ENCODE measurements at regions of chr4 and their contacts with region 1.

Region 1: GRCh38 chr4:10690185-10690907 is 5.8 kb upstream of the CLNK start:
- DNase-seq: peak; percentile 54
- ATAC-seq: peak; percentile 53
- H3K4me3 ChIP-seq: peak overlapping the region in 1 of 5 experiments; percentile 10
- H3K4me3 Mint-ChIP-seq: peak overlapping the region; percentile 23
- H3K27ac ChIP-seq: peak overlapping the region; percentile 48 to 50
- H3K27ac Mint-ChIP-seq: peak overlapping the region; percentile 77
- H3K4me1 ChIP-seq: peaks cover 43 to 47% of the 10 kb centered on the region in 2 donors
- H3K4me1 Mint-ChIP-seq: peaks cover 45% of the 10 kb centered on the region
- H3K27me3 ChIP-seq: no peaks in the 10 kb centered on the region
- H3K27me3 Mint-ChIP-seq: no peaks in the 10 kb centered on the region
- CTCF ChIP-seq: no peak

Region 2: DNA sequence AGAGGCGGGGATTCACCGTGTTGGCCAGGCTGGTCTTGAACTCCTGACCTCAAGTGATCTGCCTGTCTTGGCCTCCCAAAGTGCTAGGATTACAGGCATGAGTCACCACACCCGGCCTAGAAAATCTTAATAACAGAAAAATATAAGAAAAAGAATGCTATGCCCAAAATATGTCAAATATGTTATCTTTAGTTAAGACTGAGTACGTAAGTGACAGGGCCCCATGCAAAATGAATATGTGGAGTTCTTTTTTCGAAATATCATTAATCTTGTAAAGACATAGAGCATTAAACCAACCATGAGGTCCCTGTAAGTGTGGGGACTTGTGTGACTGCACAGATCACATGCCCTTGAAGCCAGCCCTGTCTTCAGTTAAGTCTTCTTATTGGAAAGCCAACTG is 224.2 kb before region 1 on chr4:
- CTCF ChIA-PET with region 1: no interaction called
- POLR2A ChIA-PET with region 1: no interaction called
- intact Hi-C with region 1: no loop called
- DNase-seq: no peak
- ATAC-seq: no peak
- H3K4me3 ChIP-seq: no peak overlapping the region
- H3K4me3 Mint-ChIP-seq: no peak overlapping the region
- H3K27ac ChIP-seq: no peak overlapping the region
- H3K27ac Mint-ChIP-seq: no peak overlapping the region
- H3K4me1 ChIP-seq: peaks cover 6 to 7% of the 10 kb centered on the region in 2 donors
- H3K4me1 Mint-ChIP-seq: peaks cover 9% of the 10 kb centered on the region
- H3K27me3 ChIP-seq: peaks cover 0 to 25% (median 16%) of the 10 kb centered on the region in 4 experiments
- H3K27me3 Mint-ChIP-seq: peaks cover 47% of the 10 kb centered on the region
- CTCF ChIP-seq: no peak

Region 3: DNA sequence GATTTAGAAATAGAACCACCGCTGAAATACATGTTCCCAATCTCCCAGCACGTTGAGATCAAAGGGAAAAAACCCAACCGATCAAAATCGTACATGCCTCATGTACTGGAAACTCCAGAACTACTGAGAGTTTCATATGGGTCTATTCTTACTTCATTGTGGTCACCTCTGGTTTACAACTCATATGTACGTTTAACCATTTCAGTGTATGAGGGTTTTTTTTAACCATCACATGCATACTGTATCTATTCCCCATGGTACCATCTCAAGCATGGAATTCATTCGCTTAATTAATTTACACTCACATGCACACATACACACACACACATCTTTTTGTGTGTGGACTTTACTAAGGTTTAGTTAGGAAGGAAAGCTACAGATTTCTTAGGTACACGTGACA is 40.2 kb after region 1 on chr4:
- CTCF ChIA-PET with region 1: no interaction called
- POLR2A ChIA-PET with region 1: no interaction called
- intact Hi-C with region 1: loop called (anchors 5 kb)
- DNase-seq: no peak
- ATAC-seq: no peak
- H3K4me3 ChIP-seq: no peak overlapping the region
- H3K4me3 Mint-ChIP-seq: no peak overlapping the region
- H3K27ac ChIP-seq: no peak overlapping the region
- H3K27ac Mint-ChIP-seq: no peak overlapping the region
- H3K4me1 ChIP-seq: peaks cover 31 to 34% of the 10 kb centered on the region in 2 donors
- H3K4me1 Mint-ChIP-seq: peaks cover 57% of the 10 kb centered on the region
- H3K27me3 ChIP-seq: no peaks in the 10 kb centered on the region
- H3K27me3 Mint-ChIP-seq: no peaks in the 10 kb centered on the region
- CTCF ChIP-seq: no peak

Region 4: GRCh38 chr4:11028334-11028733 is 338.0 kb after region 1 on chr4:
- CTCF ChIA-PET with region 1: no interaction called
- POLR2A ChIA-PET with region 1: no interaction called
- intact Hi-C with region 1: no loop called
- DNase-seq: no peak
- ATAC-seq: no peak
- H3K4me3 ChIP-seq: no peak overlapping the region
- H3K4me3 Mint-ChIP-seq: no peak overlapping the region
- H3K27ac ChIP-seq: no peak overlapping the region
- H3K27ac Mint-ChIP-seq: no peak overlapping the region
- H3K4me1 ChIP-seq: peaks cover 0 to 5% of the 10 kb centered on the region in 2 donors
- H3K4me1 Mint-ChIP-seq: peaks cover 9% of the 10 kb centered on the region
- H3K27me3 ChIP-seq: peaks cover 0 to 5% (median 0%) of the 10 kb centered on the region in 4 experiments
- H3K27me3 Mint-ChIP-seq: no peaks in the 10 kb centered on the region
- CTCF ChIP-seq: no peak

Measured in B cell (primary cell).